Heart right ventricle (tissue), 16 donors: ENCODE measurements at regions of chr7 and their contacts with region 1.

Region 1: DNA sequence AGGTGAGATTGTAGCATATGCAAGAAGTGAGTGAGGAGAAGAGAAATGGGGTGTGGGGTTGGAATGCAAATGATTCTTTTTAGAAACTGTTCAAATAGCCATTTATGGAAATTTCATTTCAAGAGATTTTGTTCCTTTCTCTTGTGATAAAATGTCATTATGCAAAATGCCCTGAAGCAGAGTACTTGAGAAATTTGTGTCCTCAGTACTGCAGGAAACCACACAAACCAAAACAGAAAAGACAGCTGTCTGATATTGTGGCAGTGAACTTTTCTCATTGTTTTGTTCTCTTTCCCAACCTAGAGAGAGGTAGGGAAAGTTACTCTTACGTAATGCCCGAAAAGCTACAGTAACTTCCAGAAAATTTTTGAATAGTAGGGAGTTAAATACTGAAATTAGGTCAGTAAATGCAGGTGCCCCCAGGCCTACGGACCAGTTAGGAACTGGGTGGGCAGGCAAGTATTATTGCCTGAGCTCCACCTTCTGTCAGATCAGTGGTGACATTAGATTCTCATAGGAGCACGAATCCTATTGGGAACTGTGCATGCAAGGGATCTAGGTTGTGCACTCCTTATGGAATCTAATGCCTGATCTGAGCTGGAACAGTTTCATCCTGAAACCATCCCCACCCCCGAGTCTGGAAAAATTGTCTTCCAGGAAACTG is 34.0 kb downstream of the DLD start:
- DNase-seq: no peak
- ATAC-seq: peak in 2 of 8 donors; percentile 3 to 19
- H3K4me3 ChIP-seq: no peak overlapping the region
- H3K27ac ChIP-seq: peak overlapping the region in 1 of 10 donors; percentile 6
- H3K4me1 ChIP-seq: peaks cover 0 to 38% (median 10%) of the 10 kb centered on the region in 9 donors
- H3K27me3 ChIP-seq: no peaks in the 10 kb centered on the region
- CTCF ChIP-seq: no peak

Region 2: DNA sequence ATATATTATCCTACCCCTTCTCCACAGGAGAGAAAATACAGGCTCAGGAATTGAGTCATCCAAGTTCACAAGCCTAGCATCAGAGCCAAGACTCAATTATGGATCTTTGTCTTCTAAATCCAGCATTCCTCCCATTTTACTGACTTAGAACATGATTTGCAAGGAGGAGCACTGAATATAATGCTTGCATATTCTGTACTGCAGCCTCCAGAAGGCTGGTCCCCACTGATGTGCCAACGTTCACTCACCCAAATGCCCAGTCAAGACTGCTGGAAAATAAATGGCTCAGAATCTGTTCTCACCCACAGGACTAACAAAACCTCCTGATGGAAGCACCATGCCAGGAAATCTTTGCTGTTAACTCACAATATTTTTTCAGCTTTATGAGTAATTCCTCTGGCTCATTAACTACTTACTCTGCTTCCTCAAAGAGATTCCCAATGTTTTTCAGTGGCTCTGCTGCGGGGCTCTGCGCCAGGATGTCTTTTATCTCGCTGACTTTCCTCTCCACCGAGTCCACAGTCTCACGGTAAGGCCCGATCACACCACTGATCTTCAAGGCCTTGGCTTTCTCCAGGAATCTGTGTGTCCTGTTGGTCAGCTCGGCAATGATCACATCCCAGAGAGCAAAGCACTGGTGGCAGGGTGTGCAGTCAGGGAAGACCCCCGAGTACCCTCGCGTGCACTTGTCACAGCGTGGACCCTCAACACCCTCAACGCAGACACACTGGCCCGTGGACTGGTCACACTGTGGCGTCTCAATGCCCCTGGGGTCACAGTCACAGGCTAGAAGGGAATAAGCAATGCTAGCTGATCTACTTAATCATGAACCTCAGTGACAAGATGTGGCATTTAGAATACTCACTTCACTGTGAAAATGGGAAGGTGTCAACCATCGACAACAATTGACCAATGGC is 14.9 kb after region 1 on chr7:
- intact Hi-C with region 1: loop called in 1 of 10 experiments (anchors 1 kb)
- DNase-seq: peak; percentile 55 to 63
- ATAC-seq: peak; percentile 30 to 68 (median 50)
- H3K4me3 ChIP-seq: no peak overlapping the region
- H3K27ac ChIP-seq: peak overlapping the region; percentile 23 to 75 (median 66)
- H3K4me1 ChIP-seq: peaks cover 16 to 69% (median 50%) of the 10 kb centered on the region in 9 donors
- H3K27me3 ChIP-seq: no peaks in the 10 kb centered on the region
- CTCF ChIP-seq: no peak